ENCODE measurements at regions of chr12 and their contacts with region 1.

Region 1: GRCh38 chr12:42144408-42145196 is at the start of gene GXYLT1:
- DNase-seq: peak; percentile 71 to 79 (median 77)
- H3K4me3 ChIP-seq: peak within 1 kb of the TSS; percentile 44 to 80
- H3K4me3 Mint-ChIP-seq: peak within 1 kb of the TSS; percentile 90 to 98 (median 95)
- H3K27ac ChIP-seq: peak within 1 kb of the TSS; percentile 54
- H3K27ac Mint-ChIP-seq: peak within 1 kb of the TSS; percentile 77 to 97 (median 91)
- H3K4me1 ChIP-seq: peaks cover 39% of the 10 kb centered on the region
- H3K4me1 Mint-ChIP-seq: peaks cover 33 to 49% (median 41%) of the 10 kb centered on the region in 4 donors
- H3K27me3 ChIP-seq: no peaks in the 10 kb centered on the region
- H3K27me3 Mint-ChIP-seq: no peaks in the 10 kb centered on the region
- total RNA-seq, gene GXYLT1: 8.3 to 9.5 TPM

Region 2: GRCh38 chr12:42097971-42098370 is 46.6 kb before region 1 on chr12:
- CTCF ChIA-PET with region 1: no interaction called
- POLR2A ChIA-PET with region 1: interaction called, 6 read pairs
- intact Hi-C with region 1: loop called (anchors 2 kb)
- DNase-seq: peak; percentile 49 to 76 (median 68)
- H3K4me3 ChIP-seq: peak overlapping the region in 1 of 2 donors; percentile 13
- H3K4me3 Mint-ChIP-seq: peak overlapping the region; percentile 70 to 96 (median 88)
- H3K27ac ChIP-seq: peak overlapping the region; percentile 70
- H3K27ac Mint-ChIP-seq: peak overlapping the region; percentile 87 to 99 (median 96)
- H3K4me1 ChIP-seq: peaks cover 41% of the 10 kb centered on the region
- H3K4me1 Mint-ChIP-seq: peaks cover 21 to 43% (median 31%) of the 10 kb centered on the region in 4 donors
- H3K27me3 ChIP-seq: no peaks in the 10 kb centered on the region
- H3K27me3 Mint-ChIP-seq: no peaks in the 10 kb centered on the region

Region 3: GRCh38 chr12:42172441-42173210 is 28.0 kb after region 1 on chr12:
- CTCF ChIA-PET with region 1: no interaction called
- POLR2A ChIA-PET with region 1: no interaction called
- intact Hi-C with region 1: no loop called
- DNase-seq: no peak
- H3K4me3 ChIP-seq: no peak overlapping the region
- H3K4me3 Mint-ChIP-seq: peak overlapping the region in 1 of 8 donors; percentile 33
- H3K27ac ChIP-seq: no peak overlapping the region
- H3K27ac Mint-ChIP-seq: peak overlapping the region in 2 of 7 donors; percentile 1 to 73
- H3K4me1 ChIP-seq: no peaks in the 10 kb centered on the region
- H3K4me1 Mint-ChIP-seq: peaks cover 17 to 33% (median 27%) of the 10 kb centered on the region in 4 donors
- H3K27me3 ChIP-seq: no peaks in the 10 kb centered on the region
- H3K27me3 Mint-ChIP-seq: no peaks in the 10 kb centered on the region

Region 4: GRCh38 chr12:42237052-42237852 is 92.7 kb after region 1 on chr12:
- CTCF ChIA-PET with region 1: no interaction called
- POLR2A ChIA-PET with region 1: interaction called, 8 read pairs
- intact Hi-C with region 1: loop called (anchors 1 kb)
- DNase-seq: peak; percentile 72 to 80 (median 77)
- H3K4me3 ChIP-seq: peak overlapping the region; percentile 33 to 70
- H3K4me3 Mint-ChIP-seq: peak overlapping the region; percentile 86 to 92 (median 90)
- H3K27ac ChIP-seq: peak overlapping the region; percentile 66
- H3K27ac Mint-ChIP-seq: peak overlapping the region; percentile 82 to 94 (median 93)
- H3K4me1 ChIP-seq: peaks cover 49% of the 10 kb centered on the region
- H3K4me1 Mint-ChIP-seq: peaks cover 29 to 68% (median 36%) of the 10 kb centered on the region in 4 donors
- H3K27me3 ChIP-seq: no peaks in the 10 kb centered on the region
- H3K27me3 Mint-ChIP-seq: no peaks in the 10 kb centered on the region

Region 5: GRCh38 chr12:42325653-42326474 is 181.3 kb after region 1 on chr12 and contains the starts of genes PPHLN1 and ZCRB1:
- CTCF ChIA-PET with region 1: no interaction called
- POLR2A ChIA-PET with region 1: interaction called, 5 read pairs
- intact Hi-C with region 1: loop called (anchors 1 kb)
- DNase-seq: peak; percentile 74 to 78 (median 76)
- H3K4me3 ChIP-seq: peak within 1 kb of the TSS; percentile 69 to 84
- H3K4me3 Mint-ChIP-seq: peak within 1 kb of the TSS; percentile 94 to 99 (median 99)
- H3K27ac ChIP-seq: peak within 1 kb of the TSS; percentile 79
- H3K27ac Mint-ChIP-seq: peak within 1 kb of the TSS; percentile 89 to 99 (median 99)
- H3K4me1 ChIP-seq: peaks cover 46% of the 10 kb centered on the region
- H3K4me1 Mint-ChIP-seq: peaks cover 29 to 60% (median 48%) of the 10 kb centered on the region in 4 donors
- H3K27me3 ChIP-seq: no peaks in the 10 kb centered on the region
- H3K27me3 Mint-ChIP-seq: no peaks in the 10 kb centered on the region
- total RNA-seq, gene PPHLN1: 98.0 to 104 TPM
- total RNA-seq, gene ZCRB1: 21.2 to 27.1 TPM